Naive thymus-derived CD4-positive, alpha-beta T cell (primary cell): ENCODE measurements at regions of chr12 and their contacts with region 1.

Region 1: DNA sequence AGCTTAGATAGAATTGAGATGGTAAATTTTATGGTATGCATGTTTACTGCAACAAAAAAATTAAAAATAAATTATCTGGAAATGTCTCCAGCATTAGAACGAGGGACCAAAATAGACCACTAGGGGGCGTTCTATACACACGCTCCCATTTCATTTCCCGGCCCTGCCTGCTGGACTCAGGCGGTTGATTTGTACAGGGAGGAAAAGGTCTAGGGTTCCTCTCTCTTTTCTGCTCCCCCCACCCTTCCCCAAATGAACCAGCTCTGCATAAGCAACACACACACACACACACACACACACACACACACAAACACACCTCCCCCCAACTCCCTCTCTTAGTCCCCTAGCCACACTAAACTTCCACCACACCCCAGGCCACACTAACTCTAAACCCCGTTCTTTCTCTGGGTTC is 7.8 kb upstream of the DTX1 start:
- DNase-seq: peak in 8 of 9 donors; percentile 48 to 74 (median 66)
- ATAC-seq: peak; percentile 89
- H3K4me3 ChIP-seq: no peak overlapping the region
- H3K4me3 Mint-ChIP-seq: peak overlapping the region in 3 of 10 donors; percentile 31 to 45 (median 43)
- H3K27ac ChIP-seq: no peak overlapping the region
- H3K27ac Mint-ChIP-seq: peak overlapping the region in 7 of 9 donors; percentile 13 to 81 (median 52)
- H3K4me1 ChIP-seq: peaks cover 0 to 15% of the 10 kb centered on the region in 2 donors
- H3K4me1 Mint-ChIP-seq: peaks cover 4 to 51% (median 47%) of the 10 kb centered on the region in 7 donors
- H3K27me3 ChIP-seq: no peaks in the 10 kb centered on the region
- H3K27me3 Mint-ChIP-seq: peaks cover 0 to 16% (median 0%) of the 10 kb centered on the region in 5 donors

Region 2: GRCh38 chr12:113098446-113098896 is 49.7 kb after region 1 on chr12:
- CTCF ChIA-PET with region 1: interaction called, 73 read pairs
- POLR2A ChIA-PET with region 1: no interaction called
- intact Hi-C with region 1: loop called (anchors 1 kb)
- DNase-seq: peak; percentile 42 to 70 (median 61)
- ATAC-seq: peak; percentile 83
- H3K4me3 ChIP-seq: no peak overlapping the region
- H3K4me3 Mint-ChIP-seq: no peak overlapping the region
- H3K27ac ChIP-seq: peak overlapping the region; percentile 34
- H3K27ac Mint-ChIP-seq: peak overlapping the region in 8 of 9 donors; percentile 31 to 92 (median 70)
- H3K4me1 ChIP-seq: peaks cover 0 to 18% of the 10 kb centered on the region in 2 donors
- H3K4me1 Mint-ChIP-seq: peaks cover 0 to 43% (median 33%) of the 10 kb centered on the region in 7 donors
- H3K27me3 ChIP-seq: no peaks in the 10 kb centered on the region
- H3K27me3 Mint-ChIP-seq: no peaks in the 10 kb centered on the region

Region 3: GRCh38 chr12:113135178-113136127 is 86.7 kb after region 1 on chr12 and contains the start of gene RASAL1:
- CTCF ChIA-PET with region 1: interaction called, 4 read pairs
- POLR2A ChIA-PET with region 1: no interaction called
- intact Hi-C with region 1: loop called in 1 of 2 experiments (anchors 1 kb)
- DNase-seq: peak; percentile 72 to 83 (median 80)
- ATAC-seq: peak; percentile 97
- H3K4me3 ChIP-seq: peak within 1 kb of the TSS; percentile 66
- H3K4me3 Mint-ChIP-seq: peak within 1 kb of the TSS; percentile 81 to 91 (median 86)
- H3K27ac ChIP-seq: peak within 1 kb of the TSS; percentile 59
- H3K27ac Mint-ChIP-seq: peak within 1 kb of the TSS; percentile 14 to 97 (median 92)
- H3K4me1 ChIP-seq: peaks cover 0 to 14% of the 10 kb centered on the region in 2 donors
- H3K4me1 Mint-ChIP-seq: peaks cover 9 to 25% (median 13%) of the 10 kb centered on the region in 7 donors
- H3K27me3 ChIP-seq: no peaks in the 10 kb centered on the region
- H3K27me3 Mint-ChIP-seq: peaks cover 0 to 7% (median 0%) of the 10 kb centered on the region in 5 donors
- total RNA-seq, gene RASAL1: 0.19 to 1.6 (median 1.1) TPM

Region 4: GRCh38 chr12:113152835-113153814 is 104.4 kb after region 1 on chr12:
- CTCF ChIA-PET with region 1: interaction called, 3 read pairs
- POLR2A ChIA-PET with region 1: no interaction called
- intact Hi-C with region 1: loop called (anchors 1 to 2 kb)
- DNase-seq: peak; percentile 36 to 86 (median 80)
- ATAC-seq: peak; percentile 94
- H3K4me3 ChIP-seq: peak overlapping the region; percentile 75
- H3K4me3 Mint-ChIP-seq: peak overlapping the region; percentile 76 to 88 (median 86)
- H3K27ac ChIP-seq: no peak overlapping the region
- H3K27ac Mint-ChIP-seq: peak overlapping the region in 6 of 9 donors; percentile 76 to 93 (median 85)
- H3K4me1 ChIP-seq: peaks cover 0 to 19% of the 10 kb centered on the region in 2 donors
- H3K4me1 Mint-ChIP-seq: peaks cover 0 to 27% (median 25%) of the 10 kb centered on the region in 7 donors
- H3K27me3 ChIP-seq: no peaks in the 10 kb centered on the region
- H3K27me3 Mint-ChIP-seq: peaks cover 0 to 36% (median 0%) of the 10 kb centered on the region in 5 donors

Region 5: GRCh38 chr12:113174461-113175384 is 126.0 kb after region 1 on chr12:
- CTCF ChIA-PET with region 1: interaction called, 10 read pairs
- POLR2A ChIA-PET with region 1: interaction called, 3 read pairs
- intact Hi-C with region 1: loop called (anchors 1 kb)
- DNase-seq: peak; percentile 52 to 84 (median 66)
- ATAC-seq: peak; percentile 92
- H3K4me3 ChIP-seq: no peak overlapping the region
- H3K4me3 Mint-ChIP-seq: no peak overlapping the region
- H3K27ac ChIP-seq: no peak overlapping the region
- H3K27ac Mint-ChIP-seq: peak overlapping the region in 5 of 9 donors; percentile 2 to 77 (median 55)
- H3K4me1 ChIP-seq: no peaks in the 10 kb centered on the region
- H3K4me1 Mint-ChIP-seq: peaks cover 2 to 10% (median 6%) of the 10 kb centered on the region in 7 donors
- H3K27me3 ChIP-seq: no peaks in the 10 kb centered on the region
- H3K27me3 Mint-ChIP-seq: no peaks in the 10 kb centered on the region

Region 6: GRCh38 chr12:113422030-113422885 is 373.5 kb after region 1 on chr12 and contains the start of gene SDSL:
- CTCF ChIA-PET with region 1: no interaction called
- POLR2A ChIA-PET with region 1: no interaction called
- intact Hi-C with region 1: loop called in 1 of 2 experiments (anchors 10 kb)
- DNase-seq: peak in 2 of 9 donors; percentile 11 to 38
- ATAC-seq: peak; percentile 91
- H3K4me3 ChIP-seq: no peak within 1 kb of the TSS
- H3K4me3 Mint-ChIP-seq: peak within 1 kb of the TSS in 5 of 10 donors; percentile 44 to 96 (median 89)
- H3K27ac ChIP-seq: no peak within 1 kb of the TSS
- H3K27ac Mint-ChIP-seq: peak within 1 kb of the TSS in 2 of 9 donors; percentile 58 to 91
- H3K4me1 ChIP-seq: no peaks in the 10 kb centered on the region
- H3K4me1 Mint-ChIP-seq: peaks cover 0 to 18% (median 7%) of the 10 kb centered on the region in 7 donors
- H3K27me3 ChIP-seq: no peaks in the 10 kb centered on the region
- H3K27me3 Mint-ChIP-seq: peaks cover 0 to 11% (median 0%) of the 10 kb centered on the region in 5 donors
- total RNA-seq, gene SDSL: 0.46 to 2.5 (median 1.7) TPM in 4 of 5 experiments, not detected in the other

Region 7: GRCh38 chr12:113727651-113728061 is 678.9 kb after region 1 on chr12:
- CTCF ChIA-PET with region 1: no interaction called
- POLR2A ChIA-PET with region 1: no interaction called
- intact Hi-C with region 1: no loop called
- DNase-seq: no peak
- ATAC-seq: no peak
- H3K4me3 ChIP-seq: no peak overlapping the region
- H3K4me3 Mint-ChIP-seq: no peak overlapping the region
- H3K27ac ChIP-seq: no peak overlapping the region
- H3K27ac Mint-ChIP-seq: no peak overlapping the region
- H3K4me1 ChIP-seq: no peaks in the 10 kb centered on the region
- H3K4me1 Mint-ChIP-seq: peaks cover 0 to 2% (median 0%) of the 10 kb centered on the region in 7 donors
- H3K27me3 ChIP-seq: no peaks in the 10 kb centered on the region
- H3K27me3 Mint-ChIP-seq: peaks cover 0 to 39% (median 12%) of the 10 kb centered on the region in 5 donors